Natural killer cell (primary cell): ENCODE measurements at regions of chr17 and their contacts with region 1.

Region 1: GRCh38 chr17:42819944-42820535 is 4.0 kb downstream of the BECN1 start:
- DNase-seq: peak; percentile 52 to 77
- ATAC-seq: peak in 1 of 3 donors; percentile 21
- H3K4me3 ChIP-seq: no peak overlapping the region
- H3K4me3 Mint-ChIP-seq: no peak overlapping the region
- H3K27ac ChIP-seq: no peak overlapping the region
- H3K27ac Mint-ChIP-seq: peak overlapping the region in 1 of 2 donors; percentile 51
- H3K4me1 ChIP-seq: peaks cover 18% of the 10 kb centered on the region
- H3K4me1 Mint-ChIP-seq: peaks cover 19 to 26% of the 10 kb centered on the region in 2 donors
- H3K27me3 ChIP-seq: no peaks in the 10 kb centered on the region
- H3K27me3 Mint-ChIP-seq: no peaks in the 10 kb centered on the region
- CTCF ChIP-seq: peak; percentile 73

Region 2: DNA sequence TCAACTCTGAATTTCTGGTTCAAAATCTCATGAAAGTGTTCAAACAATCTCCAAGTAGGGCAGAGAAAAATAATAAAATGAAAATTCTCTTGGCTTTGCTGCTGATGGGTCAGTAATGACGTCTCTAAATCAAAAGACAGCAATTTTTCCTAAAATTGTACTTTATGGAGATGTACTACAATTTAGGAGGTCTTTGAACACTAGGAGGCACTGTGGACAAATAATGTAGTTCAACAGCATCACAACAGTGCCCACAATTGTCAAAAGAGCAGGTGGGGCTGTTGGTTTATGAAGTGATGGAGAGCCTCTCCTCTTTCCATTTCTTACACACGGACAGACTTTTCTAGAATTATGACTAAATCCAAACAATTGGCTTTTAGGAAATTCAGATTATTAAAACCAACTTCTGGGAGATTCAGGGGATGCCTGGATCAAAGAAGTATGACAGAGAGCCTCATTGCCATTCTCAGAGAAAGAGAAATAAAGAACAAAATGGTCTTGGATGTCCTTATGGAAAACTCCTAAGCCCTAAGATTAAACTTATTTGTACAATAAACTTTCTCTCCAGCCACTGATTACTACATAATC is 99.0 kb before region 1 on chr17:
- intact Hi-C with region 1: loop called (anchors 2 kb)
- DNase-seq: peak in 1 of 2 donors; percentile 81
- ATAC-seq: peak; percentile 80 to 84 (median 81)
- H3K4me3 ChIP-seq: no peak overlapping the region
- H3K4me3 Mint-ChIP-seq: no peak overlapping the region
- H3K27ac ChIP-seq: no peak overlapping the region
- H3K27ac Mint-ChIP-seq: no peak overlapping the region
- H3K4me1 ChIP-seq: no peaks in the 10 kb centered on the region
- H3K4me1 Mint-ChIP-seq: no peaks in the 10 kb centered on the region
- H3K27me3 ChIP-seq: no peaks in the 10 kb centered on the region
- H3K27me3 Mint-ChIP-seq: no peaks in the 10 kb centered on the region
- CTCF ChIP-seq: peak; percentile 65

Region 3: DNA sequence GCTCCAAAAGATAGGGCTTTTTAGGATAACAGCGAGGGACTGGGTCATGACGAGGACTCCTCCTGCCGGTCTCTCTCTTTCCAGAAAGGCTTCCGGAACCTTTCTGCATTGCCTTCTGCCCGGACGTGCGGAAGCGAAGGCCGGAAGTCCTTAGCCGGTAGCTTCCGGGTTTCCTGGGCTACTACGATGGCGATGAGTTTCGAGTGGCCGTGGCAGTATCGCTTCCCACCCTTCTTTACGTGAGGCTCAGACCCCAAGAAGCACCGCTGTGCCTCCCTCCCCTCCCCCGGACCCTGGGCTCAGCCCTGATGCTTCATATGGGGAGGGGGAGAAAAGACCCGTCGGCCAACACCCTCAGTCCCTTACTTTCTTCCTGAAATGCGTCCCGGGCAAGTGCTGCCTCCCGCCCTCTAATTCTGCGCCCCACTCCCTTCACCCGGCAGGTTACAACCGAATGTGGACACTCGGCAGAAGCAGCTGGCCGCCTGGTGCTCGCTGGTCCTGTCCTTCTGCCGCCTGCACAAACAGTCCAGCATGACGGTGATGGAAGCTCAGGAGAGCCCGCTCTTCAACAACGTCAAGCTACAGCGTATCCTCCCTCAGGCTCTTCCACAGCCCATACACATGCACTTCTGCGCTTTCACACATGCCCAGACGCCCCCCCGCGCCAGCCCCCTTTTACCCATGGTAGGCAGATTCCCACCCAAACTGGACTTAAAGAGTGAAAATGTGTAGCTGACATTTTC is 46.6 kb before region 1 on chr17 and contains the start of gene VPS25:
- intact Hi-C with region 1: loop called (anchors 2 kb)
- DNase-seq: peak; percentile 72 to 90
- ATAC-seq: peak; percentile 93 to 98 (median 96)
- H3K4me3 ChIP-seq: peak within 1 kb of the TSS; percentile 86
- H3K4me3 Mint-ChIP-seq: peak within 1 kb of the TSS; percentile 99
- H3K27ac ChIP-seq: peak within 1 kb of the TSS; percentile 90
- H3K27ac Mint-ChIP-seq: peak within 1 kb of the TSS; percentile 94 to 98
- H3K4me1 ChIP-seq: peaks cover 14% of the 10 kb centered on the region
- H3K4me1 Mint-ChIP-seq: peaks cover 26 to 27% of the 10 kb centered on the region in 2 donors
- H3K27me3 ChIP-seq: no peaks in the 10 kb centered on the region
- H3K27me3 Mint-ChIP-seq: peaks cover 0 to 8% of the 10 kb centered on the region in 2 donors
- CTCF ChIP-seq: no peak
- total RNA-seq, gene VPS25: 39.9 to 46.4 (median 41.5) TPM

Region 4: DNA sequence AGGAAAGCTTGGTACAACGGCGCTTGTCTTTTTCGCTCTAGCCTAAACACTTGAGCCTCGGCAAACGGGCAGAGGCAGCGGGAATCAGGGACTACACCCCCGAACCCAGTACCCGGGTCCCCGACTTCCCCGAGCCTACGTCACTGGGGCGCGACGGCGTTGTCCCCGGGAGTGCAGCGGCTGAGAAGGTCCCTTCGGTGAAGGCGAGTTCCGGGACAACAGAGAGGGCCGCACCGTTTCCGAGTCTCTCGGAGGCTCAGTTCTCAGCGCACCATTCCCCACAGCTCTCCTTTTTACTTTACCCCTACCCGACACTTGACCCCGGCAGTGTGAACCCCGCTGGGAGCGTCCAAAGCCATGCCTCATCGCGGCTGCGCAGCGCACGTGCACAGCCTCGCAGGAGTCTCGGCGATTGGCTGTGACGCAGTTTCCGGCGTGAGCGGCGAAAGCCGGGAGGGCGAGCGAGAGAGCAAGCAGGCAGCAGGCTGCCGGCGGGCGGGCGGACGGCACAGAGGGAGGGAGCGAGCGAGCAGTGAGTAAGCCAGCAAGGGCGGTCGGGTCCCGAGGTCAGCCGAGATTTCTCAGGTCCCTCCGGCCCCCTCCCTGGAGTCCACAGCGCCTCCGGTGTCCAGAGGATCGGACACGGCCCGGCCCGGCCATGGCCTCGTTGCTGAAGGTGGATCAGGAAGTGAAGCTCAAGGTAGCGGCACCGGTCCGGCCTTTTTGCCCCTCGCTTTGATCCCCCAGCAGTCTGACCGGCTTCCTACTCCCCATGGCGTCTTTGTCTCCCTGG is 13.1 kb after region 1 on chr17 and contains the start of gene PSME3:
- intact Hi-C with region 1: loop called (anchors 1 kb)
- DNase-seq: peak; percentile 90 to 94
- ATAC-seq: peak; percentile 89 to 94 (median 92)
- H3K4me3 ChIP-seq: peak within 1 kb of the TSS; percentile 85
- H3K4me3 Mint-ChIP-seq: peak within 1 kb of the TSS; percentile 97
- H3K27ac ChIP-seq: peak within 1 kb of the TSS; percentile 93
- H3K27ac Mint-ChIP-seq: peak within 1 kb of the TSS; percentile 98
- H3K4me1 ChIP-seq: peaks cover 7% of the 10 kb centered on the region
- H3K4me1 Mint-ChIP-seq: peaks cover 22 to 29% of the 10 kb centered on the region in 2 donors
- H3K27me3 ChIP-seq: no peaks in the 10 kb centered on the region
- H3K27me3 Mint-ChIP-seq: peaks cover 0 to 5% of the 10 kb centered on the region in 2 donors
- CTCF ChIP-seq: no peak
- total RNA-seq, gene PSME3: 82.8 to 92.5 (median 90.6) TPM

Region 5: GRCh38 chr17:42846614-42847282 is 26.7 kb after region 1 on chr17:
- intact Hi-C with region 1: no loop called
- DNase-seq: no peak
- ATAC-seq: peak in 1 of 3 donors; percentile 11
- H3K4me3 ChIP-seq: no peak overlapping the region
- H3K4me3 Mint-ChIP-seq: no peak overlapping the region
- H3K27ac ChIP-seq: no peak overlapping the region
- H3K27ac Mint-ChIP-seq: peak overlapping the region in 1 of 2 donors; percentile 88
- H3K4me1 ChIP-seq: peaks cover 9% of the 10 kb centered on the region
- H3K4me1 Mint-ChIP-seq: peaks cover 0 to 11% of the 10 kb centered on the region in 2 donors
- H3K27me3 ChIP-seq: no peaks in the 10 kb centered on the region
- H3K27me3 Mint-ChIP-seq: no peaks in the 10 kb centered on the region
- CTCF ChIP-seq: no peak